Activated T-helper 2 cell treated with anti-CD3 and anti-CD28 coated beads, Interferon-gamma antibody, Interleukin-2, Interleukin-4, amounts not matched to agents 10 μg/mL and 5 μg/mL and 100 μg/mL, durations not matched to agents 14 hours and 24 hours and 36 hours (primary cell): ENCODE measurements at regions of chr14 and their contacts with region 1.

Region 1: GRCh38 chr14:49633640-49634546 is 1.2 kb downstream of the DNAAF2 start:
- DNase-seq: peak; percentile 92
- H3K4me3 Mint-ChIP-seq: peak overlapping the region; percentile 99
- H3K27ac Mint-ChIP-seq: peak overlapping the region; percentile 97
- H3K4me1 Mint-ChIP-seq: peaks cover 31% of the 10 kb centered on the region
- H3K27me3 Mint-ChIP-seq: no peaks in the 10 kb centered on the region

Region 2: GRCh38 chr14:49620182-49621113 is 13.4 kb before region 1 on chr14 and contains the starts of genes MGAT2 and RPL36AL:
- intact Hi-C with region 1: loop called (anchors 1 kb)
- DNase-seq: peak; percentile 96
- H3K4me3 Mint-ChIP-seq: peak within 1 kb of the TSS; percentile 91
- H3K27ac Mint-ChIP-seq: peak within 1 kb of the TSS; percentile 94
- H3K4me1 Mint-ChIP-seq: peaks cover 44% of the 10 kb centered on the region
- H3K27me3 Mint-ChIP-seq: no peaks in the 10 kb centered on the region
- total RNA-seq, gene MGAT2: 57.0 and 57.9 TPM in 2 replicates
- total RNA-seq, gene RPL36AL: 278 and 292 TPM in 2 replicates

Region 3: DNA sequence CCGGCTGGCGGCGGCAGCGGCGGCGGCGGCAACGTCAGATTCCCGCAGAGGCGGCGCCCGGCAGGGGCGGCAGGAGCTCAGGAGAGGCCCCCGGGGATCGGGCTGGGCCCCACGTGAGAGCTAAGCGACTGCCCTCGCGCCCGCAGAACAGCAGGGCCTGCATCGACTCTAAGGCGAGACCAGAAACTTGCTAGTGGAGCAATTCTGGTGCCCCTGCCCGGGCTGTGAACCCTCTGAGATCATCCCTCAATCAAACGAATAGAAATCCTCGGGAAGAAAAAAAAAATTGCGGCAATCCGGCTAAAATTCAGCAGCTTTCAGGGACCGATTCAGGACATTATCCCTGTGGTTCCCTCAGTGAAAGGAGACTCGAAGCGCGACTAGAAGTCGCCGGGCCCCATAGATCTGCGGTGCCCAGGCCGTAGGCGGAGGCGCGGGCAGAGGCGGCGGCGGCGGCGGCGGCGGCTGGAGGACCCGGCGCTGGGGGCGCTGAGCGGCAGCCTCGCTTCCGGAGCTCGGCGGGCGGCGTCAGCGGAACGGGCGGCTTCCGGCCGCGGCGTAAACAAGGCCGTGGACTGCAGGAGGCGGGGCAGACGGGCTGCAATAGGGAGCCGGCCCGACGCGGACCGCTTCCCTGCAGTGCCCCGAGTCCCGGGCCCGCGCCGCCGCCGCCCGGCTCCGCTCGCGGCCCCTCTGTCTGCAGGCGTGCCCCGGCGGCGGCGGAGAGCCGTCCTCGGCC is 133.8 kb after region 1 on chr14 and contains the start of gene KLHDC2:
- intact Hi-C with region 1: loop called (anchors 1 kb)
- DNase-seq: peak; percentile 89
- H3K4me3 Mint-ChIP-seq: peak within 1 kb of the TSS; percentile 96
- H3K27ac Mint-ChIP-seq: peak within 1 kb of the TSS; percentile 100
- H3K4me1 Mint-ChIP-seq: peaks cover 31% of the 10 kb centered on the region
- H3K27me3 Mint-ChIP-seq: no peaks in the 10 kb centered on the region
- total RNA-seq, gene KLHDC2: 28.9 and 31.6 TPM in 2 replicates

Region 4: GRCh38 chr14:49852301-49853157 is 218.6 kb after region 1 on chr14 and contains the start of gene NEMF:
- intact Hi-C with region 1: loop called (anchors 1 kb)
- DNase-seq: peak; percentile 76
- H3K4me3 Mint-ChIP-seq: peak within 1 kb of the TSS; percentile 92
- H3K27ac Mint-ChIP-seq: peak within 1 kb of the TSS; percentile 96
- H3K4me1 Mint-ChIP-seq: peaks cover 34% of the 10 kb centered on the region
- H3K27me3 Mint-ChIP-seq: no peaks in the 10 kb centered on the region
- total RNA-seq, gene NEMF: 75.0 and 81.0 TPM in 2 replicates